ENCODE measurements at regions of chr20 and their contacts with region 1.

Region 1: DNA sequence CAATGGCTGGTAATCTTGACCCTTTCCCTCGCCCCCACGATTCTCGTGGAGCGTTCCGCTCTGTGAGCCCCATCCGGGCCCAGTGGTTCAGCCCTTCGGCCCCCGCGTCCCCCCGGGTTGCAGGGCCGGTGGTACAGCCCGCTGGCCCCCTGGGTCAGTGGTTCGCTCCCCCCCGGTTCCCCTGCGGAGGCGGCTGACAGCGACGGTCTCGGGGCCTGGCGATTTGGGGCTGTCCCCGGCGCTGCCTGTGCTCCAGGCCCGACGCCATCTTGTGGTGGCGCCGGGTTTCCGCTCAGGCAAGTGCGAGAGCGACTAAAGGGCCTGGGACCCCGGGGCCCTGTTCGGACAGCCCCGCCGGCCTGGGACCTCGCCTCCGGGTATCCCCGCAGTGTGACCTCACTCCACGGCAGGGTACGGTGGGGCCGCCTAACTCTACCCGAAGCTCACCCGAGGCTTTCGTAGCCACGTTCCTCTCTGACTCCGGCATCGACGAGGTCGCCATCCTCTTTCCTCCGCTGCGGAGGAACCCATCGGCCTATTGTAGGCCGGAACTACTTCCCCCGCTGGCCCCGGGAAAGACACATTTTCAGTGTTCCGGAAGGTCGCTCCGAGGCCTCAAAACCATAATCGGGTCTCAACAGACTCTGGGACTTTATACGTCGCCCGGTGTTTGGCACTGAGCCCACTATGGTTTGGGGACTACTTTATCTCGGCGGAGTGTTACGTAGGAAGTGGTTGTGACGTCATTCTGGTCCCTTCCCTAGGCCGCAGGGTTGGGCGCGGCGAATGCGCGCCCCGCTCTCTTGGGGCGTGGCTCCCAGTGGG is at the start of gene ZNF335:
- DNase-seq: peak; percentile 89 to 99 (median 96)
- ATAC-seq: peak; percentile 89
- H3K4me3 ChIP-seq: peak within 1 kb of the TSS; percentile 74
- H3K4me3 Mint-ChIP-seq: peak within 1 kb of the TSS; percentile 80 to 100 (median 92)
- H3K27ac ChIP-seq: peak within 1 kb of the TSS; percentile 98
- H3K27ac Mint-ChIP-seq: peak within 1 kb of the TSS; percentile 99 to 100 (median 100)
- H3K4me1 ChIP-seq: peaks cover 24 to 26% of the 10 kb centered on the region in 2 donors
- H3K4me1 Mint-ChIP-seq: peaks cover 17 to 27% (median 24%) of the 10 kb centered on the region in 7 donors
- H3K27me3 ChIP-seq: no peaks in the 10 kb centered on the region
- H3K27me3 Mint-ChIP-seq: peaks cover 0 to 14% (median 0%) of the 10 kb centered on the region in 5 donors
- total RNA-seq, gene ZNF335: 39.9 to 95.2 (median 53.8) TPM

Region 2: DNA sequence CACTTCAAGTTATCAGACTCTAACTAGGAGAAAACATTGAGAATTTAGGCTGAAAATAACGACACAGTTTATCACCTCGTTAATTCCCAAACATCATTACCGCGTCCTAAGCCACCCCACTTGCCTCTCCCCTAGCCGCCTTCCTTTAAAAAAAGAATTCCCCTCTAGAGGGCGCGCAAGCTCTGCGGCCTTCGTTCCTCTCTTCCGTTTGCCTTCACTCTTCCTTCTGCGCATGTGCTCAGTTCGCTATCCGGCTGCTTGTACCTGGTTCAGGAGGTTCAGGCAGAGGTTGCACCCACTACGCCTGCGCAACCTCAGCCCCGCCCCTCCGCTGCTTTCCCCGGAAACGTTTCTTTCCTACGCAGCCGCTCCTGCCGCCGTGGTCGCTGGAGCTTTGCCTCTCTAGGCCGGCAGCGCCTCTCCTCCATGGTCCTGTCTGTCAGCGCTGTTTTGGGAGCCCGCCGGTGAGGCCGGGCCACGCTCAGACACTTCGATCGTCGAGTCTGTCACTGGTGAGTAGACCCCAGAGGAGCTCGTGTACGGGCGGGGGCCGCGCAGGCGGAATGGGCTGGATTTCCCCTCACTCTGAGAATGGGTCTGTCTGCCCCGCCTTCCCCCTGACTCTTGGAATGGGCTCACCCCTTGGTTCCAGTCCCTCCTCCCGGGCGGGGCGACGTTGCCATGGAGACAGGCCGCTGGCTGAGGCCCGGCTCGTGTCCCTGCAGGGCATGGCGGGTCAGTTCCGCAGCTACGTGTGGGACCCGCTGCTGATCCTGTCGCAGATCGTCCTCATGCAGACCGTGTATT is 608.9 kb before region 1 on chr20 and contains the start of gene SYS1:
- CTCF ChIA-PET with region 1: interaction called, 3 read pairs
- POLR2A ChIA-PET with region 1: no interaction called
- intact Hi-C with region 1: loop called (anchors 1 to 5 kb)
- DNase-seq: peak; percentile 97 to 99 (median 99)
- ATAC-seq: peak; percentile 90
- H3K4me3 ChIP-seq: peak within 1 kb of the TSS; percentile 92
- H3K4me3 Mint-ChIP-seq: peak within 1 kb of the TSS; percentile 83 to 100 (median 97)
- H3K27ac ChIP-seq: peak within 1 kb of the TSS; percentile 99
- H3K27ac Mint-ChIP-seq: peak within 1 kb of the TSS; percentile 92 to 100 (median 99)
- H3K4me1 ChIP-seq: peaks cover 24 to 30% of the 10 kb centered on the region in 2 donors
- H3K4me1 Mint-ChIP-seq: peaks cover 24 to 56% (median 47%) of the 10 kb centered on the region in 7 donors
- H3K27me3 ChIP-seq: no peaks in the 10 kb centered on the region
- H3K27me3 Mint-ChIP-seq: peaks cover 0 to 2% (median 0%) of the 10 kb centered on the region in 5 donors
- total RNA-seq, gene SYS1: 23.9 to 111 (median 67.1) TPM

Region 3: DNA sequence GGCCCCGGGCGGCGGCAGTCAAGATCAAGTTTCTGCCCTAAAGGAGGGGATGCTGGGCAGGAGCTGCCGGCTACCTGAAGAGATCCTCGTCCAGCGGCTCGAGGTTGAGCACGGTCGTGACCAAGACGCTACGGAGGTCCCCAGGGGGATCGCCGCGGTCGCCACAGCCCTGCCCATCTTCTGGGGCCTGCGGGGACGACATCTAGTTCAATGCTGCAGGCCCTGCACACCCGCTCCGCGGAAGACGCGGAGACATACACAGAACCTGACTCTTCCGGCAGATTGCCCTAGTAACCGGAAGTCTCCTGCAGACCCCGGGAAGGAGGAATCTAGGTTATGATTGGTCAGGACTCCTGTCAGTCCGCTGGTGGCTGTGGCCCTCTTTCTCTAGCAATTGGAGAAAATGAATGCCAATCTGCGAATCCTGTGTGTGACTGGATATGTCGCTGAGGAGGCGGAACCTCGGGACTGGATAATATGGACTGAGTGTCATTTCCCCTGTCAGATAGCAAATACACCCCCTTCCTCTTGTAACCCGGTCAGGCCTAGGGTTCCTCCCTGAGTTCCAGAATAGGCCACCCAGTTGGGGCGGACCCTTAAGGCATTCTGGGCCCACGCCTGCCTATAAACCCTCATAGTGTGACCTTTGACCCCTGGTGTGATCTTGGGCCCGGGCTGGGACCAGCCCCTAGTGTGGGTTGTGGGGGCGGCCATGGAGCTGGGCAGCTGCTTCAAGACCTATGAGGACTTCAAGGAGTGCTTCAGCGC is 114.6 kb before region 1 on chr20 and contains the starts of genes ACOT8 and ZSWIM3:
- CTCF ChIA-PET with region 1: interaction called, 3 read pairs
- POLR2A ChIA-PET with region 1: interaction called, 21 read pairs
- intact Hi-C with region 1: loop called (anchors 1 kb)
- DNase-seq: peak; percentile 62 to 100 (median 97)
- ATAC-seq: peak; percentile 99
- H3K4me3 ChIP-seq: peak within 1 kb of the TSS; percentile 94
- H3K4me3 Mint-ChIP-seq: peak within 1 kb of the TSS; percentile 95 to 98 (median 96)
- H3K27ac ChIP-seq: peak within 1 kb of the TSS; percentile 95
- H3K27ac Mint-ChIP-seq: peak within 1 kb of the TSS; percentile 96 to 99 (median 98)
- H3K4me1 ChIP-seq: peaks cover 16 to 26% of the 10 kb centered on the region in 2 donors
- H3K4me1 Mint-ChIP-seq: peaks cover 23 to 76% (median 63%) of the 10 kb centered on the region in 7 donors
- H3K27me3 ChIP-seq: no peaks in the 10 kb centered on the region
- H3K27me3 Mint-ChIP-seq: no peaks in the 10 kb centered on the region
- total RNA-seq, gene ACOT8: 20.5 to 35.5 (median 29.2) TPM
- total RNA-seq, gene ZSWIM3: 1.3 to 6.8 (median 6.0) TPM

Region 4: GRCh38 chr20:45910670-45911485 is 61.0 kb before region 1 on chr20:
- CTCF ChIA-PET with region 1: no interaction called
- POLR2A ChIA-PET with region 1: no interaction called
- intact Hi-C with region 1: loop called in 1 of 2 experiments (anchors 2 kb)
- DNase-seq: peak; percentile 54 to 93 (median 67)
- ATAC-seq: peak; percentile 93
- H3K4me3 ChIP-seq: peak overlapping the region; percentile 76
- H3K4me3 Mint-ChIP-seq: peak overlapping the region; percentile 59 to 84 (median 80)
- H3K27ac ChIP-seq: peak overlapping the region; percentile 2
- H3K27ac Mint-ChIP-seq: peak overlapping the region in 5 of 9 donors; percentile 25 to 67 (median 46)
- H3K4me1 ChIP-seq: peaks cover 13 to 17% of the 10 kb centered on the region in 2 donors
- H3K4me1 Mint-ChIP-seq: peaks cover 0 to 21% (median 16%) of the 10 kb centered on the region in 7 donors
- H3K27me3 ChIP-seq: no peaks in the 10 kb centered on the region
- H3K27me3 Mint-ChIP-seq: peaks cover 6 to 18% (median 10%) of the 10 kb centered on the region in 5 donors

Region 5: GRCh38 chr20:46004889-46005473 is 33.1 kb after region 1 on chr20:
- CTCF ChIA-PET with region 1: interaction called, 3 read pairs
- POLR2A ChIA-PET with region 1: interaction called, 5 read pairs
- intact Hi-C with region 1: loop called in 1 of 2 experiments (anchors 5 kb)
- DNase-seq: peak in 6 of 9 donors; percentile 42 to 73 (median 58)
- ATAC-seq: peak; percentile 71
- H3K4me3 ChIP-seq: peak overlapping the region; percentile 51
- H3K4me3 Mint-ChIP-seq: peak overlapping the region; percentile 68 to 85 (median 82)
- H3K27ac ChIP-seq: no peak overlapping the region
- H3K27ac Mint-ChIP-seq: peak overlapping the region; percentile 38 to 95 (median 71)
- H3K4me1 ChIP-seq: peaks cover 44 to 59% of the 10 kb centered on the region in 2 donors
- H3K4me1 Mint-ChIP-seq: peaks cover 57 to 91% (median 83%) of the 10 kb centered on the region in 7 donors
- H3K27me3 ChIP-seq: no peaks in the 10 kb centered on the region
- H3K27me3 Mint-ChIP-seq: peaks cover 12 to 30% (median 18%) of the 10 kb centered on the region in 5 donors

Region 6: GRCh38 chr20:46363800-46364634 is 392.1 kb after region 1 on chr20:
- CTCF ChIA-PET with region 1: no interaction called
- POLR2A ChIA-PET with region 1: interaction called, 5 read pairs
- intact Hi-C with region 1: loop called in 1 of 2 experiments (anchors 1 kb)
- DNase-seq: peak; percentile 80 to 91 (median 85)
- ATAC-seq: peak; percentile 87
- H3K4me3 ChIP-seq: peak overlapping the region; percentile 95
- H3K4me3 Mint-ChIP-seq: peak overlapping the region; percentile 89 to 98 (median 92)
- H3K27ac ChIP-seq: peak overlapping the region; percentile 99
- H3K27ac Mint-ChIP-seq: peak overlapping the region; percentile 77 to 98 (median 95)
- H3K4me1 ChIP-seq: peaks cover 60 to 67% of the 10 kb centered on the region in 2 donors
- H3K4me1 Mint-ChIP-seq: peaks cover 54 to 92% (median 74%) of the 10 kb centered on the region in 7 donors
- H3K27me3 ChIP-seq: no peaks in the 10 kb centered on the region
- H3K27me3 Mint-ChIP-seq: no peaks in the 10 kb centered on the region

Measured in naive thymus-derived CD4-positive, alpha-beta T cell (primary cell).